Activated CD4-positive, alpha-beta memory T cell treated with anti-CD3 and anti-CD28 coated beads for 36 hours (primary cell): ENCODE measurements at regions of chr1 and their contacts with region 1.

Region 1: DNA sequence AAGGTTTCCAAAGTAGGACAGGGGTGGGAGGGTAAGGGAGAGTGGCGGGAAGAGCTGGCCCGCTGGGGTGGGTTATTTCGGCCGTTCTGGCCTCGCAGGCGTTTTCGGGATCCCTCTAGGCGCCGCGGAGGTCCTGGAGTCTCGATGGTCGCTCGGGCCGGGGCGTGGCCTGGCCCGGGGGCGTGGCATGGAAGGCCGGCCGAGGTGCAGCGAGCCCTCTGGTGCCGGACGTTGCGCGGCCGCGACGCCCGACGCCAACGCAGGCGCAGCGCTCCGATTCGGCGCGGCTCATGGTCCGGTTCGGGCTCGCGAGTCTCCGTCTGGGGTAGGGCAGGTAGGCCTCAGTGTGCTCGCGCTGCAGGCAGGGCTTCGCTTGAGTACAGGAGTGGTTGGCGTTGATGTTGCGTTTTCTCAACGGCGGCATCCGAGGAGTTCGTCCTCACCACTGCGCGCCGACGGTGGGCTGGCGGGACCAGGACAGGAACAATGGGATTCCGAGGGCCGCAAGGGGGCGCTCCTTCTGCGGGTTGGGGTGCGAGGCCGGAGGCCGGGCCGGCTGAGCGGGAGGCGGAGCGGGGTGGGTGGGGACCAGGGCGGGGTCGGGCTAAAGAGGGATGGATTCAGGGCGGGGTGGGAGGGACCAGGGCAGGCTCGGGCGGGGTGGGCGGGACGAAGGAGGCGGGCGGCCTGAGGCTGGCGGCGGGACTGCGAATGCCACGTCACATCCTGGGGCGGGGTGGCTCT is at the start of gene PGBD2:
- DNase-seq: peak; percentile 97
- H3K4me3 Mint-ChIP-seq: peak within 1 kb of the TSS; percentile 90
- H3K27ac Mint-ChIP-seq: peak within 1 kb of the TSS; percentile 91
- H3K4me1 Mint-ChIP-seq: peaks cover 21% of the 10 kb centered on the region
- H3K27me3 Mint-ChIP-seq: no peaks in the 10 kb centered on the region
- total RNA-seq, gene PGBD2: 4.2 to 4.3 TPM

Region 2: DNA sequence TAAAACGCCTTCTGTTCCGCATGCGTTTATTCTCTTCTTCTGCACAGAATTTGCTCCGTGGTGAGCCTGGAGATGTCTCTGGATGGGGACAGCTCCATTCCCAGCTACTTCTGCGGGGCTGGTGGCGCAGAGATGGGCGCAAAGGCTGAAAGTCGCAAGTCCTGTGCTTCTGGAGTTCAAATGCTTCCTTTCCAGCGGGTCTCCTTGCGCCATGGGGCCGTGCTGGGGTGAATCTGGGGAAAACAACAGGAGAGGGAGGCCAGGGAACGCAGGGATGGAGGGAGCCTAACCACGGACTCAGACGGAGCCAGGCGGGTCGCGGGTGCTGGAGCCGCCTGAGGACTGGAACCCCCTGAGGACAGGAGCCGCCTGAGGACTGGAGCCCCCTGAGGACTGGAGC is 600.1 kb before region 1 on chr1:
- CTCF ChIA-PET with region 1: no interaction called
- POLR2A ChIA-PET with region 1: no interaction called
- intact Hi-C with region 1: no loop called
- DNase-seq: no peak
- H3K4me3 Mint-ChIP-seq: no peak overlapping the region
- H3K27ac Mint-ChIP-seq: no peak overlapping the region
- H3K4me1 Mint-ChIP-seq: no peaks in the 10 kb centered on the region
- H3K27me3 Mint-ChIP-seq: peaks cover 1% of the 10 kb centered on the region

Region 3: GRCh38 chr1:248739572-248740205 is 166.5 kb before region 1 on chr1:
- CTCF ChIA-PET with region 1: no interaction called
- POLR2A ChIA-PET with region 1: no interaction called
- intact Hi-C with region 1: no loop called
- DNase-seq: no peak
- H3K4me3 Mint-ChIP-seq: no peak overlapping the region
- H3K27ac Mint-ChIP-seq: no peak overlapping the region
- H3K4me1 Mint-ChIP-seq: no peaks in the 10 kb centered on the region
- H3K27me3 Mint-ChIP-seq: peaks cover 7% of the 10 kb centered on the region

Region 4: GRCh38 chr1:248825909-248826760 is 80.0 kb before region 1 on chr1 and contains the start of gene SH3BP5L:
- CTCF ChIA-PET with region 1: interaction called, 4 read pairs
- POLR2A ChIA-PET with region 1: interaction called, 7 read pairs
- intact Hi-C with region 1: loop called (anchors 1 kb)
- DNase-seq: peak; percentile 94
- H3K4me3 Mint-ChIP-seq: peak within 1 kb of the TSS; percentile 84
- H3K27ac Mint-ChIP-seq: peak within 1 kb of the TSS; percentile 97
- H3K4me1 Mint-ChIP-seq: peaks cover 52% of the 10 kb centered on the region
- H3K27me3 Mint-ChIP-seq: no peaks in the 10 kb centered on the region
- total RNA-seq, gene SH3BP5L: 19.7 to 19.9 TPM

Region 5: DNA sequence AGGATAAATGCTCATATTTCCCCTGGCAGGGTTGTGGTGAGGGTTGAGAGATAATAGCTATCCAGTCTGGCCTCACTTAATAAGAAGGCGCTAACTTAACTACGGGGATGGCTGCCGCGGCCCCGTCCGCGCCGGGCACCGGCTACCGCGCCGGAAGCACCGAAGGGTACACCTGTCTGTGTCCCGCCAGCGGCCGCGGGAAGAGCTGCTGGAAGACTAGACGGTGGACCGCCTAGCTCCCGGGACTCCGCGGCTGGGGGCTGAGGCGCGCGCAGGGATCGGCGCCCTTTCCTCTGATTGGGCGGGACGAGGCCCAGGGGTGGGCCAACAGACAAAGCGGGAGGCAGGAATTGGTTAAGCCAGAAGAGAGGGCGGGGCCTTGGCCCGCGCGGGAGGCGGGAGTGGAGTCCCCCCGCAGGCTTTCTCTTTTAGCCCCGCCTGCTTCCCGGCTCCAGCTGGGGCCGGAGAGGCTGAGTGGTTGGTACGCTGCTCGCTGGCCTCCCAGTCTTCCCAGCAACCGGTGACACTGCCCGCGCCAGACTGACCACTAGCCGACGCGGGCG is 68.3 kb before region 1 on chr1 and contains the start of gene ZNF672:
- CTCF ChIA-PET with region 1: interaction called, 4 read pairs
- POLR2A ChIA-PET with region 1: no interaction called
- intact Hi-C with region 1: loop called (anchors 1 kb)
- DNase-seq: peak; percentile 96
- H3K4me3 Mint-ChIP-seq: no peak within 1 kb of the TSS
- H3K27ac Mint-ChIP-seq: no peak within 1 kb of the TSS
- H3K4me1 Mint-ChIP-seq: peaks cover 27% of the 10 kb centered on the region
- H3K27me3 Mint-ChIP-seq: peaks cover 2% of the 10 kb centered on the region
- total RNA-seq, gene ZNF672: 50.3 to 51.4 TPM

Region 6: GRCh38 chr1:248849152-248849551 is 57.0 kb before region 1 on chr1:
- CTCF ChIA-PET with region 1: no interaction called
- POLR2A ChIA-PET with region 1: no interaction called
- intact Hi-C with region 1: no loop called
- DNase-seq: no peak
- H3K4me3 Mint-ChIP-seq: no peak overlapping the region
- H3K27ac Mint-ChIP-seq: no peak overlapping the region
- H3K4me1 Mint-ChIP-seq: no peaks in the 10 kb centered on the region
- H3K27me3 Mint-ChIP-seq: no peaks in the 10 kb centered on the region

Region 7: GRCh38 chr1:248858891-248859889 is 47.0 kb before region 1 on chr1 and contains the start of gene ZNF692:
- CTCF ChIA-PET with region 1: interaction called, 6 read pairs
- POLR2A ChIA-PET with region 1: interaction called, 5 read pairs
- intact Hi-C with region 1: loop called (anchors 1 kb)
- DNase-seq: peak; percentile 98
- H3K4me3 Mint-ChIP-seq: peak within 1 kb of the TSS; percentile 91
- H3K27ac Mint-ChIP-seq: peak within 1 kb of the TSS; percentile 92
- H3K4me1 Mint-ChIP-seq: peaks cover 51% of the 10 kb centered on the region
- H3K27me3 Mint-ChIP-seq: no peaks in the 10 kb centered on the region
- total RNA-seq, gene ZNF692: 60.4 to 65.9 TPM

Region 8: GRCh38 chr1:248873409-248873992 is 32.7 kb before region 1 on chr1:
- CTCF ChIA-PET with region 1: interaction called, 3 read pairs
- POLR2A ChIA-PET with region 1: no interaction called
- intact Hi-C with region 1: loop called (anchors 1 kb)
- DNase-seq: peak; percentile 98
- H3K4me3 Mint-ChIP-seq: peak overlapping the region; percentile 91
- H3K27ac Mint-ChIP-seq: peak overlapping the region; percentile 92
- H3K4me1 Mint-ChIP-seq: peaks cover 24% of the 10 kb centered on the region
- H3K27me3 Mint-ChIP-seq: peaks cover 8% of the 10 kb centered on the region

Region 9: DNA sequence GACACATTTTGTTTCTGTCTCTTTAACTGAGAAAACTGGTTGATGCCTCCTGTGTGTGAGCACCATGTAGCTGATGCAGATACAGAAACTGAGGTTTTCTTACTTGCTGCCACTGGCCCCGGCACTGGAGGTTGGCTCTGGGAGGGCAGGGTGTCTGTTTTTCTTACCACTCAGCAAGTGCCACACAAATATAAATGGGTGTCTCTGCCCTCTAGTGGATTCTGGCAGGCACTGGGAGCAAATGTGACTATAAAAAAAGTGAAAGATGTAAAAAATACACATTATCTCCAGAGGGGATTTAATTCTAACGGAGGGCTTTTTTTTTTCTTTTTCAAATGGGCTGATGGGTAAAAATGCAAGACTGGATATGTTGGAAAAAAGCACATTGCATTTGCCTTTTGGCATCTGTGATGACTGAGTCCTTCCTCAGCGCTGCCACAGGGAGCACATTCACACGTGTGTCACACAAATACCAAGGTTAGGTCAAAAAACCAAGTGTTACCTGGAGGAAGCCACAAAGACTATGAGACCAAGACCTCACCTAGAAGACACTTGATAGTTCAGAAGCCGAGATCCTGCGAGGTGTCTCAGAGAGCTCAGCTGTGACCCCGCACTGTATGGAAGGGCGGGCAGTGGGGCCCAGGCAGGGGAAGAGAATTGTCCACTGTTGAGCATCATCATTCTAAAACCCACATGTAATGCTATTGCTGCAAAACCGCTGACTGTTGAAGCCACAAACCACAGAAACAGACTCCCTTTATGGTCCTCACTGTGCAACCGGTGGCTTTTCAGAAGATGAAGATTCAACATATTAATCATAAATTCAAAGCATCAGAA is 18.7 kb after region 1 on chr1:
- CTCF ChIA-PET with region 1: interaction called, 3 read pairs
- POLR2A ChIA-PET with region 1: no interaction called
- intact Hi-C with region 1: loop called (anchors 1 kb)
- DNase-seq: peak; percentile 75
- H3K4me3 Mint-ChIP-seq: peak overlapping the region; percentile 28
- H3K27ac Mint-ChIP-seq: peak overlapping the region; percentile 59
- H3K4me1 Mint-ChIP-seq: peaks cover 22% of the 10 kb centered on the region
- H3K27me3 Mint-ChIP-seq: no peaks in the 10 kb centered on the region